PC-3 (cell line): ENCODE measurements at regions of chr20 and their contacts with region 1.

Region 1: GRCh38 chr20:25539742-25540672 is 45.3 kb downstream of the NINL start:
- DNase-seq: peak; percentile 39
- ATAC-seq: peak; percentile 68
- H3K4me3 ChIP-seq: no peak overlapping the region
- H3K27ac ChIP-seq: no peak overlapping the region
- H3K4me1 ChIP-seq: peaks cover 8% of the 10 kb centered on the region
- H3K27me3 ChIP-seq: no peaks in the 10 kb centered on the region
- CTCF ChIP-seq: peak; percentile 62; the same call in 1 of the 2 replicates

Region 2: GRCh38 chr20:25418776-25419175 is 121.2 kb before region 1 on chr20:
- CTCF ChIA-PET with region 1: no interaction called
- POLR2A ChIA-PET with region 1: no interaction called
- intact Hi-C with region 1: no loop called
- DNase-seq: peak; percentile 32
- ATAC-seq: peak; percentile 76
- H3K4me3 ChIP-seq: no peak overlapping the region
- H3K27ac ChIP-seq: no peak overlapping the region
- H3K4me1 ChIP-seq: peaks cover 8% of the 10 kb centered on the region
- H3K27me3 ChIP-seq: no peaks in the 10 kb centered on the region
- CTCF ChIP-seq: no peak

Region 3: GRCh38 chr20:25470045-25470444 is 70.0 kb before region 1 on chr20:
- CTCF ChIA-PET with region 1: interaction called, 7 read pairs
- POLR2A ChIA-PET with region 1: no interaction called
- intact Hi-C with region 1: loop called (anchors 5 kb)
- DNase-seq: peak; percentile 68
- ATAC-seq: peak; percentile 92
- H3K4me3 ChIP-seq: no peak overlapping the region
- H3K27ac ChIP-seq: no peak overlapping the region
- H3K4me1 ChIP-seq: no peaks in the 10 kb centered on the region
- H3K27me3 ChIP-seq: no peaks in the 10 kb centered on the region
- CTCF ChIP-seq: peak; percentile 92

Region 4: GRCh38 chr20:25496968-25497640 is 42.9 kb before region 1 on chr20:
- CTCF ChIA-PET with region 1: interaction called, 16 read pairs
- POLR2A ChIA-PET with region 1: no interaction called
- intact Hi-C with region 1: no loop called
- DNase-seq: peak; percentile 100
- ATAC-seq: peak; percentile 99
- H3K4me3 ChIP-seq: no peak overlapping the region
- H3K27ac ChIP-seq: peak overlapping the region; percentile 43
- H3K4me1 ChIP-seq: peaks cover 20% of the 10 kb centered on the region
- H3K27me3 ChIP-seq: no peaks in the 10 kb centered on the region
- CTCF ChIP-seq: 0 out of 2 replicates have a peak, but pooled peaks have one; percentile 10

Region 5: GRCh38 chr20:25685276-25686080 is 145.5 kb after region 1 on chr20:
- CTCF ChIA-PET with region 1: no interaction called
- POLR2A ChIA-PET with region 1: no interaction called
- intact Hi-C with region 1: no loop called
- DNase-seq: no peak
- ATAC-seq: peak; percentile 43
- H3K4me3 ChIP-seq: no peak overlapping the region
- H3K27ac ChIP-seq: no peak overlapping the region
- H3K4me1 ChIP-seq: no peaks in the 10 kb centered on the region
- H3K27me3 ChIP-seq: no peaks in the 10 kb centered on the region
- CTCF ChIP-seq: peak; percentile 22; the same call in 1 of the 2 replicates